CD4-positive, alpha-beta T cell (primary cell): ENCODE measurements at regions of chr11 and their contacts with region 1.

Region 1: DNA sequence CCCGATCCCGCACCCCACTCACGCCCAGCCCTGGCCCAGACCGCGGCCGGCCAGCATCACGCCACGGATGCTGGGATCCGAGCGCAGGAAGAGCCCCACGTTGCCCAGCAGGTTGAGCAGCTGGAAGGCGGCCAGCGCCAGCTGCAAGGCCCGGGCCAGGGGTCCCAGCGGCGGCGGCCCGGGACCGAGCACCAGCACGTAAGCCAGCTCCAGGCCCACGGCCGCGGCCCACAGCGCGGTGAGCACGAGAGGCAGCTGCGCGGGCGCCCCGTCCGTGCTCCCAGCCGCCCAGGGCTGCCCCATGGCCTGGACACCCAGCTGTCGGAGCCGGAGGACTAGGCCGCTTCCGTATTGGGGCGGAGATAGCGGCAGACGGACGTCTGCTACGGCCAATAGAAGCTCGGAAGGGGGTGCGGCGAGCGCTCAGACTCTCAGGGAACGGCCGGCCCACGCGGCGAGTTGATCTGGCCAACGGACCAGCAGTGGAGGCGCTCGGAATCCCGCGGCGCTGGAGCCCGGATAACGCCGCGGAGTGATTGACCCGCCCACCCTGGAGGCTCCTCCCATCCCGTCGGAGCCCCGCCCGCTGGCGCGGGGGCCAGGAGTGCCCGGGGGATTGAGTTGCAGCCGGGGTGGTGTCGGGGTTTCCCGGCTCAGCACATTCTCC is at the start of gene ZDHHC24:
- DNase-seq: peak; percentile 59 to 92 (median 73)
- ATAC-seq: peak; percentile 82
- H3K4me3 ChIP-seq: peak within 1 kb of the TSS; percentile 76
- H3K4me3 Mint-ChIP-seq: peak within 1 kb of the TSS; percentile 90
- H3K27ac ChIP-seq: peak within 1 kb of the TSS; percentile 69 to 70
- H3K27ac Mint-ChIP-seq: peak within 1 kb of the TSS; percentile 75
- H3K4me1 ChIP-seq: peaks cover 44% of the 10 kb centered on the region
- H3K4me1 Mint-ChIP-seq: peaks cover 39% of the 10 kb centered on the region
- H3K27me3 ChIP-seq: no peaks in the 10 kb centered on the region
- H3K27me3 Mint-ChIP-seq: no peaks in the 10 kb centered on the region
- CTCF ChIP-seq: no peak
- total RNA-seq, gene ZDHHC24: 17.0 to 18.4 TPM

Region 2: DNA sequence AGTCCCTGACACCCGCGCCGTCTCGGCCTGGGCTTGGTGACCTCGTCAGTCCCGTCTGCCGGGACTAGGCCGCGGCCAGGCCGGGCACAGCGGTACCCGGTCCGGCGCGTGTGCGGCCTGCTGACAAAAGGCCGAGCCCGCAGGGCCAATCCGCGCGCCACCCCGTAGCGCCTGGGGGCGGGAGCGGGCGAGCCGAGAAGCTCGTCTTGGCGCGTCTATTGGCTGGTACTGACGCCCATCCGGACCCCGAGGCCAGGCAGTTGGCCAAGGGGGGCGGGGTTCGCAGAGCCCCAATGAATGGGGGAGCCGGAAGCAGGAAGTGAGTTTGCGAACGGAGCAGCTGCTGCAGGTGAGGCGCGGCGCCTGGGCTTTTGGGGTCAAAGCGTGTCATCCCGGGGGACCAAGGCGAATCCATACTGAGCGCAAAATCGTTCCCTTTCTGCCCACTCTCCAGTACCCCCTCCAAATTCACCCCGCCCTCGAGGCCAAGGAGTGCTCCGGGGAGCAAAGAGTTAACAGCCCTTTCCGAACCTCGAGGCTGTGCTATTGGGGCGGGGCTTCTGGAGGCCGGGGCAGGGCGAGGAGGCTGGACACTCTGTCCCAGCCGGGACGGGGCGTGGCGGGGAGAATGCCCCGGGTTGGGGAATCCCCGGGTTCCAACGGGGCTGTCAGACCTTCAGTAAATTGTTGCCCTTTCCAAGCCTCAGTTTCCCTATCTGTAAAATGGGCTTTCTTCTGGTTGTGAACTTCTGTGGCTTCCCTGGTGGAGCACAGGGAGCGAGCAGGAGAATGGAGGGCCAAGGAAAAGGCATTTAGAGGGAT is 65.5 kb before region 1 on chr11 and contains the start of gene DPP3:
- CTCF ChIA-PET with region 1: no interaction called
- POLR2A ChIA-PET with region 1: interaction called, 14 read pairs
- intact Hi-C with region 1: loop called in 1 of 2 experiments (anchors 2 kb)
- DNase-seq: peak; percentile 91 to 97 (median 95)
- ATAC-seq: peak; percentile 98
- H3K4me3 ChIP-seq: peak within 1 kb of the TSS; percentile 79
- H3K4me3 Mint-ChIP-seq: peak within 1 kb of the TSS; percentile 91
- H3K27ac ChIP-seq: peak within 1 kb of the TSS; percentile 70 to 79
- H3K27ac Mint-ChIP-seq: peak within 1 kb of the TSS; percentile 83
- H3K4me1 ChIP-seq: peaks cover 29% of the 10 kb centered on the region
- H3K4me1 Mint-ChIP-seq: peaks cover 24% of the 10 kb centered on the region
- H3K27me3 ChIP-seq: no peaks in the 10 kb centered on the region
- H3K27me3 Mint-ChIP-seq: no peaks in the 10 kb centered on the region
- CTCF ChIP-seq: no peak
- total RNA-seq, gene DPP3: 16.9 to 17.7 TPM

Region 3: DNA sequence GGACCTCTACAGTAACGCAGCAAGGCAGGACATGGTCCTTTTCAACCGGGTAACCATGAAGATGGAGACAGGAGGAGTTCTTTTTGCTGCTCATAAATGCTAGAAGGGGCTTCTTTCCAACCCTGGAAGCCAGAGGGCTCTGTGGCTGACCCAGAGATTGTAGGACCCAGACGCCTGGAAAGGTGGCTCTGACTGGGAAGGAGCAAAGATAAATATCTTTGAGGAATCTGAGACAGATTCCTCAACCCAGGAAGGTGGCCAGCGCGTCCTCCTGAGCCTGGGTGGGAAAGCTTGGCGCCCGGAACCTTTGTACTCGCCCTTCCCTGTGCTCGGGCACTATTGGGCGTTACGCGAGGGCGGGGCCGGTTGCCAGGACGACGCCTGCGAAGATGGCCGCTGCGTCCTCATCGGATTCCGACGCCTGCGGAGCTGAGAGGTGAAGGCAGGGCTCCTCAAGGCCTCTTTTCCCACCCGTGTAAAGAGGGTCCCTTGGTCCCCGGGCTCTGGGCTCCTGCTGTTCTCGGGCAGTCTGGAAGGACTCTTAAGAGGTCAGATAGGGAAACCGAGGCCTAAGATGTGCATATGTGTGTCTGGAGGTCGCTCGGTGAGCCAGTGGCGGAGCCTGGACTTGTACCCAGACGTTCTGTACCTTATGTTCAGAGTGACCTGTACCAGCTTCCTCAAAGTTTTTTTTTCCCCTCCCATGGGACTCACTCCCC is 35.4 kb before region 1 on chr11 and contains the start of gene BBS1:
- CTCF ChIA-PET with region 1: no interaction called
- POLR2A ChIA-PET with region 1: interaction called, 10 read pairs
- intact Hi-C with region 1: loop called in 1 of 2 experiments (anchors 2 kb)
- DNase-seq: peak; percentile 73 to 90 (median 80)
- ATAC-seq: peak; percentile 99
- H3K4me3 ChIP-seq: peak within 1 kb of the TSS; percentile 77
- H3K4me3 Mint-ChIP-seq: peak within 1 kb of the TSS; percentile 90
- H3K27ac ChIP-seq: no peak within 1 kb of the TSS
- H3K27ac Mint-ChIP-seq: peak within 1 kb of the TSS; percentile 61
- H3K4me1 ChIP-seq: peaks cover 14% of the 10 kb centered on the region
- H3K4me1 Mint-ChIP-seq: peaks cover 16% of the 10 kb centered on the region
- H3K27me3 ChIP-seq: no peaks in the 10 kb centered on the region
- H3K27me3 Mint-ChIP-seq: no peaks in the 10 kb centered on the region
- CTCF ChIP-seq: no peak
- total RNA-seq, gene BBS1: 11.7 to 11.9 TPM

Region 4: GRCh38 chr11:66568124-66568916 is 22.5 kb after region 1 on chr11 and contains the start of gene CTSF:
- CTCF ChIA-PET with region 1: no interaction called
- POLR2A ChIA-PET with region 1: interaction called, 20 read pairs
- intact Hi-C with region 1: no loop called
- DNase-seq: peak; percentile 50 to 82 (median 65)
- ATAC-seq: peak; percentile 93
- H3K4me3 ChIP-seq: peak within 1 kb of the TSS; percentile 46
- H3K4me3 Mint-ChIP-seq: peak within 1 kb of the TSS; percentile 77
- H3K27ac ChIP-seq: no peak within 1 kb of the TSS
- H3K27ac Mint-ChIP-seq: no peak within 1 kb of the TSS
- H3K4me1 ChIP-seq: peaks cover 12% of the 10 kb centered on the region
- H3K4me1 Mint-ChIP-seq: no peaks in the 10 kb centered on the region
- H3K27me3 ChIP-seq: no peaks in the 10 kb centered on the region
- H3K27me3 Mint-ChIP-seq: peaks cover 7% of the 10 kb centered on the region
- CTCF ChIP-seq: no peak
- total RNA-seq, gene CTSF: 16.0 to 16.8 TPM